ENCODE measurements at regions of chr11 and their contacts with region 1.

Region 1: GRCh38 chr11:112410325-112410724 is 149.7 kb upstream of the PLET1 start:
- DNase-seq: no peak
- H3K4me3 ChIP-seq: no peak overlapping the region
- H3K4me3 Mint-ChIP-seq: no peak overlapping the region
- H3K27ac ChIP-seq: no peak overlapping the region
- H3K27ac Mint-ChIP-seq: no peak overlapping the region
- H3K4me1 ChIP-seq: no peaks in the 10 kb centered on the region
- H3K4me1 Mint-ChIP-seq: peaks cover 13% of the 10 kb centered on the region
- H3K27me3 ChIP-seq: no peaks in the 10 kb centered on the region
- H3K27me3 Mint-ChIP-seq: peaks cover 4 to 7% (median 4%) of the 10 kb centered on the region in 3 donors
- CTCF ChIP-seq: no peak

Region 2: DNA sequence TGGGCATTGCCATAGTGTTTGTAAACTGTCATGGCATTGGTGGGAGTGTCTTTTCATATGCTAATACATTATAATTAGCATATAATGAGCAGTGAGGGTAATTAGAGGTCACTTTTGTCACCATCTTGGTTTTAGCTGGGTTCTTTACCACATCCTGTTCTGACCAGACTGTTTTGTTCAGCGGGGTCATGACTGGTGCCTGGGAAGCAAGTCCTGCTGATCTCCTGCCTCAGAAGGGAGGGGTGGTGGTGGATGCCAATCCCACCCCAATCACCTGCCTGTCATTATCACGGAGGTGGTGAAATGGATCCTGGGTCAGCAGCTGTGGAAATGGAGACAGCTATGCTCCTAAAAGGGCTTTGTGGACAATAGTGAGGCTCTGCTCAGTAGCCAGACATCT is 277.6 kb before region 1 on chr11:
- intact Hi-C with region 1: no loop called
- DNase-seq: peak in 1 of 3 donors; percentile 4
- H3K4me3 ChIP-seq: no peak overlapping the region
- H3K4me3 Mint-ChIP-seq: no peak overlapping the region
- H3K27ac ChIP-seq: no peak overlapping the region
- H3K27ac Mint-ChIP-seq: peak overlapping the region in 2 of 7 donors; percentile 7 to 73
- H3K4me1 ChIP-seq: peaks cover 23 to 25% of the 10 kb centered on the region in 2 donors
- H3K4me1 Mint-ChIP-seq: peaks cover 27% of the 10 kb centered on the region
- H3K27me3 ChIP-seq: no peaks in the 10 kb centered on the region
- H3K27me3 Mint-ChIP-seq: peaks cover 0 to 2% (median 0%) of the 10 kb centered on the region in 3 donors
- CTCF ChIP-seq: no peak

Region 3: DNA sequence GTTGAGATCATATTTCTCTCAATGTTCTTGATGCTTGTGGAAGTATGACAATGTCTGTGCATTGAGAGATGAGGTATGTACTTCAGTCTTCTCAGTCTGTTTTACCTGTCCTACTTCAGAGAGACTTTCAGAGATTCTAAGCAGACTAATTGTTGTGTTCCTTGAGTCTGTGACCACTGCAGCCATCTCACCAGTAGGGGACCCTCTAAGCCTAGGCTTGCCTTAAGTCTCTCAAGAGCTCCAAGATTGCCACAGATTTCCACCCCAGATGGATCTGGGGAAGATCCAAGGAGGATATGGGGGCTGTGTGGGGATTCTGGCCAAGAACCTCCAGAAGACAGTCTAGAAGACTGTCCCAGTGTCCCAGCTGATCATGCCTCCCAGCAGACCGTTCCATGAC is 30.2 kb after region 1 on chr11:
- intact Hi-C with region 1: no loop called
- DNase-seq: no peak
- H3K4me3 ChIP-seq: no peak overlapping the region
- H3K4me3 Mint-ChIP-seq: no peak overlapping the region
- H3K27ac ChIP-seq: no peak overlapping the region
- H3K27ac Mint-ChIP-seq: no peak overlapping the region
- H3K4me1 ChIP-seq: no peaks in the 10 kb centered on the region
- H3K4me1 Mint-ChIP-seq: no peaks in the 10 kb centered on the region
- H3K27me3 ChIP-seq: no peaks in the 10 kb centered on the region
- H3K27me3 Mint-ChIP-seq: peaks cover 0 to 10% (median 7%) of the 10 kb centered on the region in 3 donors
- CTCF ChIP-seq: no peak

Region 4: DNA sequence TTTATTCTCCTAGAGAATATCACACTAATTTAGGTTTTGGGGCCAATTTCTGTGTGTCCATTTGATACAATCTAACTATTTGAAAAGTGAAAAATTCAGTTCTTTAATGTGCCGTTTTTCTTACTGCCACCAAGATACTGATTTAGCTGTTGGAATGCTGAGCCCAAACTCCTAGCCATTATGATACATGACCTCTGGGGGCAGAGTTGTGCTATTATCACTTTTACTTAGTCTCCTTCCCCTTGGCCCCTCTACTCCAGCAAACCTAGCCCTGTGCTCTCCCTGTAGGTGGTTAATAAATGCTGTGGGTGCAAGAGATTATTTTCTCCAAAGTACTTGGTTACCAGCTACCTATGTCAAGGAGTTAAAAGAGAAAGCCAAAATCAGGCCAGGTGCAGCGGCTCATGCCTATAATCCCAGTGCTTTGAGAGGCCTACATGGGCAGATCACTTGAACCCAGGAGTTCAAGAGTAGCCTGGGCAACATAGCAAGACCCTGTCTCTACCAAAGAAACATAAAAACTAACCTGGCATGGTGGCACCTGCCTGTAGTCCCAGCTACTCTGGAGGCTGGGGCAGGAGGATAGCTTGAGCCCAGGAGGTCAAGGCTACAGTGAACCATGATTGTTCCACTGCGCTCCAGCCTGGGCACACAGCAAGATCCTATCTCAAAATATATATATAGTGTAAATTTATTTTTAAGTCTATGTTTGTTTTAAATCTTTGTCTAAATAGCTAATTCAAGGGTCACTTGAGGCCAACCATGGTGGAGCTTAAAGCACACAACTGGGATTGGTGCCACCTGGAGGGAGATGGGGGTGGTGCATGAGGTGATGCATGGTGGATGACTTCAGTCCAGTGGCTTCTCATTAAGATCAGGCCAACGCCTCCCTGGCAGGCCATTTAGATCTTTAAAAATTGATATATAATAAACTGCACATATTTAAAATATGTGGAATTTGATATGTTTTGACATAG is 43.6 kb after region 1 on chr11:
- intact Hi-C with region 1: no loop called
- DNase-seq: peak in 2 of 3 donors; percentile 11 to 12
- H3K4me3 ChIP-seq: no peak overlapping the region
- H3K4me3 Mint-ChIP-seq: no peak overlapping the region
- H3K27ac ChIP-seq: no peak overlapping the region
- H3K27ac Mint-ChIP-seq: no peak overlapping the region
- H3K4me1 ChIP-seq: no peaks in the 10 kb centered on the region
- H3K4me1 Mint-ChIP-seq: peaks cover 1% of the 10 kb centered on the region
- H3K27me3 ChIP-seq: no peaks in the 10 kb centered on the region
- H3K27me3 Mint-ChIP-seq: peaks cover 0 to 4% (median 2%) of the 10 kb centered on the region in 3 donors
- CTCF ChIP-seq: peak; percentile 43

Region 5: DNA sequence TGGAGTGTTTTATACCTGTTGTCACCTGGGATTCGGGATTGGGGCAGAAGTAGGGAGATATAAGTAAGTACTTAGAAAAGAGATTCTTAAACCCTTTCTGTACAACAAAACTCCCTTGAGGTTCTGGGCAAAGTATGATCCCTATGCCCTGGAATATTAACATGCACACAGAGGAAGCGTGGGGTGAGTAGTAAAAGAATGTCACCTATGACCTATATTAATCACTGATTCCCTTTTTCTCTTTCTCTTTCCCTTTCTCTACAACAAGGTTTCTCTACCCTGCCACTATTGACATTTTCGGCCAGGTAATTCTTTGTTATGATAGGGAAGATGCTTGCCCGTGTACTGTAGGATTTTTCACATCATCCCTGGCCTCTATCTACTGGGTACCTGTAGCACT is 60.0 kb after region 1 on chr11:
- intact Hi-C with region 1: loop called in 1 of 2 experiments (anchors 10 kb)
- DNase-seq: no peak
- H3K4me3 ChIP-seq: no peak overlapping the region
- H3K4me3 Mint-ChIP-seq: no peak overlapping the region
- H3K27ac ChIP-seq: no peak overlapping the region
- H3K27ac Mint-ChIP-seq: no peak overlapping the region
- H3K4me1 ChIP-seq: no peaks in the 10 kb centered on the region
- H3K4me1 Mint-ChIP-seq: no peaks in the 10 kb centered on the region
- H3K27me3 ChIP-seq: no peaks in the 10 kb centered on the region
- H3K27me3 Mint-ChIP-seq: peaks cover 7 to 12% (median 8%) of the 10 kb centered on the region in 3 donors
- CTCF ChIP-seq: no peak

Measured in CD14-positive monocyte (primary cell).